Psoas muscle (tissue), 8 donors: ENCODE measurements at regions of chr16 and their contacts with region 1.

Region 1: DNA sequence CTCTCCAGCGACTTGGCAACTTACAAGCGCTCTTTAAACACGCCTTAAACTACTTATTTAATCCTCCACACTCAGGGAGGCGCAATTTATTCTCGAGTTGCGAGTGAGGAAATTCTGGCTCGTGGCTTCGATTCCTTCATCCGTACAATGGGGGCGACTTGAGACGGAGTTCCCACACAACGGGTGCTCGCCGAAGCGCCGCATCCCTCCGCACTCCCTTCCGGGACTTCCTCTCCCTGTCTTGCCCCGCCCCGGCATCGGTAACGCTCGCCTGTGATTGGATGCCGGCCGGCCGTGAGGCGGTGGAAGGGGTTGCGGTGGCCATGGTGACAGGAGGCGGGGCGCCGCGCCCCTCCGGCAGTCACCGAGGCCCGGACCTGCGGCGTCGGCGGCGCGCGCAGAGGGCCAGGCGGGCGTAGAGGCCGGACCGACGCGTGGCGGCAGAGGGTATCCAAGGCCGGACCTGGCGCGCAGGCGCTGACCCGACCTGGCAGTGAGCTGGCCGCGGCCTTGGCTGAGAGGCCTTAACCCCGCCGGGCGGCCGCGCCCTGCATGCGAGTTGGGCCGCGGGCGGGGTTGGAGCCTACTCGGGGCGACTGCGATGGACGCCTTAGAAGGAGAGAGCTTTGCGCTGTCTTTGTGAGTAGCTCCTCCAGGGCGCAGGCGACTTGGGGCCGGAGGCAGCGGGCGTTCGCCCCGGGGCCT is at the start of gene ARL2BP:
- DNase-seq: peak; percentile 99
- ATAC-seq: peak; percentile 98 to 99 (median 99)
- H3K4me3 ChIP-seq: peak within 1 kb of the TSS; percentile 87
- H3K27ac ChIP-seq: peak within 1 kb of the TSS; percentile 87
- H3K4me1 ChIP-seq: peaks cover 8% of the 10 kb centered on the region
- H3K27me3 ChIP-seq: no peaks in the 10 kb centered on the region
- CTCF ChIP-seq: peak; percentile 5
- total RNA-seq, gene ARL2BP: 25.2 to 39.9 (median 29.2) TPM

Region 2: GRCh38 chr16:57185944-57186871 is 58.7 kb before region 1 on chr16 and contains the starts of genes PSME3IP1 and RSPRY1:
- intact Hi-C with region 1: loop called (anchors 5 kb)
- DNase-seq: peak; percentile 96 to 98
- ATAC-seq: peak; percentile 95 to 98 (median 97)
- H3K4me3 ChIP-seq: peak within 1 kb of the TSS; percentile 93
- H3K27ac ChIP-seq: peak within 1 kb of the TSS; percentile 96
- H3K4me1 ChIP-seq: peaks cover 25% of the 10 kb centered on the region
- H3K27me3 ChIP-seq: no peaks in the 10 kb centered on the region
- CTCF ChIP-seq: no peak
- total RNA-seq, gene PSME3IP1: 47.9 to 60.4 (median 50.2) TPM
- total RNA-seq, gene RSPRY1: 14.6 to 19.5 (median 16.7) TPM

Region 3: DNA sequence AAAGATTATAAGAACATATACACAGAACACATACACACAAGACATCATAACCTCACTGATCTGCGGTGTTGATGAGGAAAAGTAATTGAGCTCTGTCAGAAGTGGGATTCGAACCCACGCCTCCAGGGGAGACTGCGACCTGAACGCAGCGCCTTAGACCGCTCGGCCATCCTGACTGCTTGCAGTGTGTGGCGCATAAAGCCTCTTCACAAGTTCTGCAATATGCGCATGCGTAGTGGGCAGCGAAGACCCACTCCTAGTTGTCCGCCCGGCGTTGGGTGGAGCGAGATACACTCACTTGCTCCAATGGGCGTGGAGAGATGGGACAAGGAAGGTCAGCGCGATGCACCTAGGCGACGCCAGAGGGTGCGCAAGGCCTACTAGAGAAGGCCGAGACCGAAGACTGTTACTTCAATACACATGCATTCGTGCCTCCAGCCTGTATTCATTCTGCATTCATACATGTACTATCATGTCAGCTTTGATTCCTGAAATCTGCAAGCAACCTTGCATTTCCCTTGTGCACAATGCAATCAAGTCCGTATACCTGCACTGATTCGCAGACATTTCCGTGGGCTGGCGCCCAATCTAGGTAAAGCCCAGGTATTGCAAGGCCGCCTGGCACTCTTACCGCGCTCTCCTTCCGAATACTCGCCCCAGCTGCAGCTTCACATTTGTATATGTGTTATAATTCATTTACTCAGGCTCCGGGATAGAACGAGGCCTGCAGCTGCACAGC is 55.6 kb after region 1 on chr16:
- intact Hi-C with region 1: loop called in 1 of 2 experiments (anchors 5 kb)
- DNase-seq: peak; percentile 98 to 99
- ATAC-seq: peak; percentile 94 to 95 (median 94)
- H3K4me3 ChIP-seq: peak overlapping the region; percentile 62
- H3K27ac ChIP-seq: peak overlapping the region; percentile 84
- H3K4me1 ChIP-seq: peaks cover 15% of the 10 kb centered on the region
- H3K27me3 ChIP-seq: no peaks in the 10 kb centered on the region
- CTCF ChIP-seq: peak; percentile 96